Psoas muscle (tissue), 8 donors: ENCODE measurements at regions of chr17 and their contacts with region 1.

Region 1: DNA sequence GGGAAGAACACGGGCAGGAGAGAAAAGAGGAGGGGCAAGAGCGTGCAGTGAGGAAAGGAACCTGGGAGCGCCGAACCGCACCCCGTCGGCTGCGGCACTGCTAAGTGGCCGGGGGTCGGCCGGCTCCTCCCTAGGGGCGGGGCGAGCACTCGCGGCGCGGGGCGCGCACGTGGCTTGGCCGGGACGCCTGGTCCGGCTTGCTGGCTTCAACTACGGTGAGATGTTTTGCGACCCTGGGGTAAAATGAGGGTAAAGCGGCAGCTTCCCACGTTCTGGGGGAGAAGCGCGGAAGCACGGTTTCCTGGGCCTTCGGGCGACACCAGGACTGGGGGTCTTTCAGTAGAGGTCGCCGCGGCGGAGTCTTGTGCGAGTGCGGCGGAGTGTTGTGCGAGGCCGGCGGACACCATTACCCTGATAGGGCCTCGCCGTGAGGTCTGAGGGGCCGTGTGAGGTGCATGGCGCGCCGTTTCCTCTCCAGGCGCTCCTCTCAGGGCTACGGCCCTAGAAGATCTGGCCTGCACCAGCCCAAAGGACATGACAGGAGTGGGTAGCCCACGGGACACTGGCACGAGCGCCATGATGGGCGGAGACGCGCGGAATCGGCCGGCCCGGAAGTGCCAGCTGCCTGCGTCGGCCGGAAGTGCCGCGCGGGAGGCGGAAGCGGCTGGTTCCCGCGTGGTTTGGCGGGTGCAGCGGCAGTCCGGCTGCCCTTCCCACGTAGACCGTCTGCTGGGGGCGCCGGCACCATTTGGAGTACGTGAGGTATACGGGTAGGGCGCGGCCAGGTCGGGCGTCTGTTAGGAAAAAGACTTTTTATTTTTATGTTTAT is at the starts of genes MYO19 and PIGW:
- DNase-seq: peak; percentile 92 to 95
- ATAC-seq: peak; percentile 91 to 94 (median 94)
- H3K4me3 ChIP-seq: peak within 1 kb of the TSS; percentile 92
- H3K27ac ChIP-seq: peak within 1 kb of the TSS; percentile 100
- H3K4me1 ChIP-seq: peaks cover 8% of the 10 kb centered on the region
- H3K27me3 ChIP-seq: no peaks in the 10 kb centered on the region
- CTCF ChIP-seq: peak; percentile 14
- total RNA-seq, gene MYO19: 10.1 to 19.2 (median 13.7) TPM
- total RNA-seq, gene PIGW: 6.2 to 14.9 (median 10.6) TPM

Region 2: GRCh38 chr17:36486204-36487194 is 48.6 kb before region 1 on chr17 and contains the start of gene ZNHIT3:
- intact Hi-C with region 1: loop called in 1 of 2 experiments (anchors 5 kb)
- DNase-seq: peak; percentile 91 to 94
- ATAC-seq: peak; percentile 92 to 96 (median 96)
- H3K4me3 ChIP-seq: peak within 1 kb of the TSS; percentile 99
- H3K27ac ChIP-seq: peak within 1 kb of the TSS; percentile 83
- H3K4me1 ChIP-seq: peaks cover 17% of the 10 kb centered on the region
- H3K27me3 ChIP-seq: no peaks in the 10 kb centered on the region
- CTCF ChIP-seq: no peak
- total RNA-seq, gene ZNHIT3: 22.7 to 32.3 (median 31.1) TPM

Region 3: DNA sequence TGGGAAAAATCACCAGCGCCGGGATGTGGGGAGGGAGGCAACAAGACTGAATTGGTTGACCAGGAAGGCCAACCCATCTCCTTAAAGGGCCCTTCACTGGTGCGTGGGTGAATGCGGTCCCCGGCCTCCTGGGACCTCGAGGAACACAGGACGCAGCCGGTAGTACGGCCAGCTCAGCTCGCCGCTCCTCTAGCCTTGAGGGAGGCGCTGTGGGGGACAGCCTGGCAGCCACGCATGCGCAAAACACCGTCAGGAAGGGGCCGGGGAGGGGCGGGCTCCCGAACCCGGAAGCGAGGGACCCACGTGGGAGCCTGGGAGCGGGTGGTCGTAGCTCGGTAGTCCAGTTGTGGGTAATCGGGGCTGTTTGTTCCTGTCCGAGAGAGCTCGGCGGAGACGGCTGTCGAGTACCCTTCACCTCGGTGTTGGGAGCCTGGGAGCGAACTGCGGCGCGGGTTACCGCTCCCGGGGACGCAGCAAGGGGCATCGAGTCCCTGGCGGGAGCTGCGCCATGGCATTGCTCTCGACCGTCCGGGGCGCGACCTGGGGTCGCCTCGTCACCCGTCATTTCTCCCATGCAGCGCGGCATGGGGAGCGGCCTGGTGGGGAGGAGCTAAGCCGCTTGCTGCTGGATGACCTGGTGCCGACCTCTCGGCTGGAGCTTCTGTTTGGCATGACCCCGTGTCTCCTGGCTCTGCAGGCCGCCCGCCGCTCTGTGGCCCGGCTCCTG is 66.4 kb after region 1 on chr17 and contains the start of gene MRM1:
- intact Hi-C with region 1: loop called in 1 of 2 experiments (anchors 5 kb)
- DNase-seq: peak; percentile 95 to 98
- ATAC-seq: peak; percentile 95 to 96 (median 95)
- H3K4me3 ChIP-seq: peak within 1 kb of the TSS; percentile 92
- H3K27ac ChIP-seq: peak within 1 kb of the TSS; percentile 93
- H3K4me1 ChIP-seq: peaks cover 14% of the 10 kb centered on the region
- H3K27me3 ChIP-seq: no peaks in the 10 kb centered on the region
- CTCF ChIP-seq: no peak
- total RNA-seq, gene MRM1: 8.7 to 12.1 (median 8.9) TPM

Region 4: GRCh38 chr17:36948717-36949460 is 413.8 kb after region 1 on chr17 and contains the start of gene AATF:
- intact Hi-C with region 1: loop called in 1 of 2 experiments (anchors 10 kb)
- DNase-seq: peak; percentile 97 to 98
- ATAC-seq: peak; percentile 99 to 100 (median 100)
- H3K4me3 ChIP-seq: peak within 1 kb of the TSS; percentile 74
- H3K27ac ChIP-seq: peak within 1 kb of the TSS; percentile 90
- H3K4me1 ChIP-seq: peaks cover 21% of the 10 kb centered on the region
- H3K27me3 ChIP-seq: peaks cover 5 to 41% (median 15%) of the 10 kb centered on the region in 3 donors
- CTCF ChIP-seq: no peak
- total RNA-seq, gene AATF: 23.5 to 40.6 (median 36.6) TPM